IMR-90 (cell line): ENCODE measurements at regions of chr10 and their contacts with region 1.

Region 1: GRCh38 chr10:68135922-68136718 is 26.8 kb downstream of the MYPN start:
- DNase-seq: peak; percentile 92
- ATAC-seq: peak; percentile 66
- H3K4me3 ChIP-seq: peak overlapping the region; percentile 23; the same call in 1 of the 2 replicates
- H3K27ac ChIP-seq: peak overlapping the region; percentile 92
- H3K4me1 ChIP-seq: peaks cover 22% of the 10 kb centered on the region
- H3K27me3 ChIP-seq: no peaks in the 10 kb centered on the region
- CTCF ChIP-seq: no peak
- POLR2A ChIP-seq: peak; percentile 68
- RAD21 ChIP-seq: no peak

Region 2: GRCh38 chr10:68095176-68095575 is 40.9 kb before region 1 on chr10:
- CTCF ChIA-PET with region 1: interaction called, 3 read pairs
- POLR2A ChIA-PET with region 1: interaction called, 3 read pairs
- dilution Hi-C with region 1: no loop called
- in situ Hi-C with region 1: no loop called
- intact Hi-C with region 1: loop called (anchors 2 kb)
- DNase-seq: peak; percentile 78
- ATAC-seq: peak; percentile 56
- H3K4me3 ChIP-seq: no peak overlapping the region
- H3K27ac ChIP-seq: peak overlapping the region; percentile 90
- H3K4me1 ChIP-seq: peaks cover 14% of the 10 kb centered on the region
- H3K27me3 ChIP-seq: no peaks in the 10 kb centered on the region
- CTCF ChIP-seq: no peak
- POLR2A ChIP-seq: no peak
- RAD21 ChIP-seq: no peak